Right ventricle myocardium superior (tissue), 1 donor: ENCODE measurements at regions of chr17 and their contacts with region 1.

Region 1: DNA sequence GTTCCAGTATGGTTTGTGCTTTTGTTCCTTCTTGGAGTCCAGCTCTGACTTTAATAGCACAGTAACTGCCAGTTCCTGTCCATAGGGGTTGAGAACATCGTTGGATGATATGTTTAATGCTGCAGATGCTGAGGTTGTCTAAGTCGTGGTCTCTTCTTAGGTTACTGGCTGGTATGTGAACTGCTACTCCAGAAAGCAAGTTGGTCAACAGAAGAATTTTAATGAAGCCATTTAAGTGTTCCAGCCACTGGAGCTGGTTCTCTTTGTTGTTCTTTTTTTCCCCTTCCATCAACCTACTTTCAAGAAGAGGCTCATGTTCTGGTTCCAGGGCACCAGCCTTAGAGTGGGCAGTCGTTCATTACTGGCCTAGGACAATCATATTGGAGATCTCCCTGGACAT is 140.3 kb upstream of the TBX2 start:
- DNase-seq: no peak
- ATAC-seq: no peak

Region 2: DNA sequence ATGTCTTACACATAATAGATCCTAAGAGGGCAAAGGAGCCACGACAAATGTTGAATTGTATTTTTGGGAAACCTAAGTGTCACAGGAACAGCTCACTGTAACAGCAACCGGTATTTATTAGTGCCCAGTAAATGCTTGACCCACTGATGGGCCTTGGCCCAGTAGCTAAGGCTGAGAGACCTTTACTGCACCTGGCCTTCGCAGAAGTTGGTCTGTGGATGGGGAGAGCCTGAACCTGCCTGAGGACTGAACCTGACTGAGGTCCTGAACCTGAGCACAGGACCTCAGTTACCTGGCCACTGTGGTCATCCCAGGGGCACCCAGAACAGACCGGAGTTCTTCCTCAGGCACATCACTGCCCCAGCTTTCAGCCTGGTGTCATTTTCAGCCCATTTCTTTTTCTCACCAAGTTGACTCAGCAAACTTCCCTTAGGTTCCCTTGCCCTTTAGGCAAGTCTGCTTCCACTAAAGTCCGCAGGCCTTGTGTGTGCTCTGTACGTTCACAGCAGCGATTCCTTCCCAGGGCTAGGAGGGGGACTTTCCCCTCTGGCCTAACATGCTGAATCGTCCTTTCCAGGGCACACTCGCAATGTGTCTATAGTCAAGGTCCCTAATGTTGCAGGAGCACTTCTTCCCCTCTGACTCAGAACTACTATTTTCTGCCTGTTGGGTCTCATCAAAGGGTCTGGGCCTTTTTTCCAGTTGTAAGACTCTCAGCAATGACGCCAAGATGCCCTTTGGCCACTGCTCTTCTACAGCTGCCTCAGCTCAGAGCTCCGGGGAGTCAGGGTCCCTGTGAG is 75.6 kb after region 1 on chr17:
- intact Hi-C with region 1: loop called (anchors 5 kb)
- DNase-seq: no peak
- ATAC-seq: no peak